GM18951 (cell line): ENCODE measurements at regions of chr7 and their contacts with region 1.

Region 1: GRCh38 chr7:20598459-20599309 is 16.8 kb upstream of the ABCB5 start:
- POLR2A ChIP-seq: no peak

Region 2: DNA sequence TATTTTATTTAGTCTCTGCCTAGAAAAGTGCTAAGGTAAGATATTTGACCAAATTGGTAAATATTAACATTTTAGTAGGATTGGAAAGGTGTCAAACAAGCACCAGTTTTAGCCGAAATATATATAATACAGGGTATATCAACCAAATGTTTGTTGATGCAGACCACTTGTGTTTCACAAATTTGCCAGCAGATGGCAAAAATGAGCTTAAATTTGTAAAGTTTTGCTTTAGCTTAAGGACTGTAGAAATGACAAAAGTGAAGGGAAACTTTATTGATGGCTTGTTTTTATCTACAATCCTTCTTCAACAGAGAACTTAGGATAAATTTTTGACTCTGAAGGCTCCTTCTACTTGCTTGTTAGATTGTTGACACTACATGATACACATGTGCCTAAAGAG is 885.0 kb before region 1 on chr7:
- in situ Hi-C with region 1: loop called (anchors 10 kb)
- POLR2A ChIP-seq: no peak

Region 3: DNA sequence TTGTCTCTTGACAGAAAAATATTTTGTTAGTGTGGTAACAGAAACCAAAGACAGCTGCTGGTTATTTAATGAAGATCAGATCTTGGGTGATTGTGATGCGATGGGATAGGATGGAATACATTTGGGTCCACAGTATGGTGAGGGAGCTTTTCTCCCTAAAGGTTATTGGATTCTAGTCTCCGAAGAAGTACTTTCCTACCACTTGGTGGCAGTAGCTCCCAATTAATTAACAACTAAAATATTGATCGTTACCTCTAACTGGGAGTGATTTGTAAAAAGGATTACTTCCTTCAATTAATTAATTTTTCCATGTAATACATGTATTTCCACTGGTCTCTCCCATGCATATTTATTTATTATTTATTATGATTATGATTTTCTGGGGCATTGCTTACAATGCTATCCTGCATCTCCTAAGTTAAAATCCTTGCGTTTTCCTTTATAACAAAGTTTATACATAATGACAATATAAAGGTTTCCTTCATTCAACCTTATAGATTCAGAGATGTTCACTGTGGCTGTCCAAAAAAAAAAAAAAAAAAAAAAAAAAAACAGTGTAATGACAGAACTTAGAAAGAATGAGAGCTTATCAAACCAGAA is 850.8 kb before region 1 on chr7:
- in situ Hi-C with region 1: loop called (anchors 10 kb)
- POLR2A ChIP-seq: no peak

Region 4: DNA sequence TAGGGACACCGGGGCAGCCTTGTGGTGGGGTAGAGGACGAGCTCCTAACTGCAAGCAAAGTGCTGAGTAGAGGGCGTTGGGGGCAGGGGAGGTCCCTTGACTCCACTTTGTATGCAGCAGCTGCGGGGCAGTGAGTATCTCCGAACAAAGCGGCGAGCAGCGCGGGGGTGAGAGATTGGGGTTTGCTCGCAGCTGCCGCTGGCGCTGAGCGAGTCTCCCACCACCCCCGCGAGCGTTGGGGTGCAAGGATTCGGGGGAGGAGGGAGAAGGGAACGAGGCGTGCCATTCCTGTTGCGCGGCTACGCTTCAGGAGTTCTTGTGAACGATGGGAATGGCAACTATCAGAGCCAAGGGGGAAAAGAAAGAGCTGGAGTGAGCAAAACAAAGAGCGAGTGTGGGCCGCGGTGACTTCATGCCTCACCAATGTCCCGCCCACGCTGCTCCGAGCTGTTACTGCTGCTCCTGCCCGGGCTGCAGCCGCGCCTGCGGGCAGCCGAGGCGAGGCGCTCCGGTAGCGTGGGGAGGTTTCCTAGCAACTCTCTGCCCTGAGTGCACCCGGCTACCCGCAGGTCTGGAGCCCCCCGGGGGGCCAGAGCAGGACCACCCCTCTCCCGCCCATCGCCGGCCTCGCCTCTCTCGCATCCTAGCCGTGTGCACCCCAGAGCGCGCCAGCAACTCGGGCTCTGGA is 268.3 kb before region 1 on chr7 and contains the start of gene ITGB8:
- in situ Hi-C with region 1: loop called (anchors 25 kb)
- POLR2A ChIP-seq: peak; percentile 59